B cell (primary cell): ENCODE measurements at regions of chr9 and their contacts with region 1.

Region 1: GRCh38 chr9:78261403-78262001 is 25.6 kb downstream of the CEP78 start:
- DNase-seq: peak; percentile 27
- ATAC-seq: no peak
- H3K4me3 ChIP-seq: no peak overlapping the region
- H3K4me3 Mint-ChIP-seq: no peak overlapping the region
- H3K27ac ChIP-seq: no peak overlapping the region
- H3K27ac Mint-ChIP-seq: no peak overlapping the region
- H3K4me1 ChIP-seq: no peaks in the 10 kb centered on the region
- H3K4me1 Mint-ChIP-seq: no peaks in the 10 kb centered on the region
- H3K27me3 ChIP-seq: no peaks in the 10 kb centered on the region
- H3K27me3 Mint-ChIP-seq: no peaks in the 10 kb centered on the region
- CTCF ChIP-seq: peak; percentile 82

Region 2: DNA sequence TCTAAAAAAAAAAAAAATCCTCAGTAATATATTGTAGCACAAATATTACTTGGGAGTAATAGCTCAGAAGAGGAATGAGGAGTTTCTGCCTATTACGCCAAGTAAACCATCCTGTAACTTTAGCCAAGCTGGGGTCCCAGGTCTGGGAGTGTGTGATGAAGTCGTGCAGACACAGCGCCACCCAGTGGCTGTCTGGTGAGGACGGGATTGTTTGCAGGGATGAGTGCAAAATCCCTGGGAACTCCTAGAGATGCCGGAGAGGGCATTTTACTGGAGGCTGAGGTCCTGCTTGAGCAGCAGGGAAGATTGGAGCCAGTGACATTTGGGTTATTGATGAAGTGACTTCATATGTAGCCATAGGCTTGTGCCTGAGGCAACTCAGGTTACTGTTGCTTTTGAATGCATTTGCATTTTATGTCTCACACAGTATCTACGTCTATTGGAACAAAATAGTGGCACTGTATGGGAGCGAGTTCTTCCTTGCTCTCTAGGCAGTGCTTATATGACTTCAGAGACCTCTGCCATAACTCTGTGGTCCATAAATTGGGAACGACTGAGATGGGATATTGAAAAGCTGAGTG is 108.2 kb after region 1 on chr9:
- CTCF ChIA-PET with region 1: interaction called, 12 read pairs
- POLR2A ChIA-PET with region 1: no interaction called
- intact Hi-C with region 1: no loop called
- DNase-seq: peak; percentile 49
- ATAC-seq: peak; percentile 56
- H3K4me3 ChIP-seq: no peak overlapping the region
- H3K4me3 Mint-ChIP-seq: no peak overlapping the region
- H3K27ac ChIP-seq: no peak overlapping the region
- H3K27ac Mint-ChIP-seq: no peak overlapping the region
- H3K4me1 ChIP-seq: no peaks in the 10 kb centered on the region
- H3K4me1 Mint-ChIP-seq: no peaks in the 10 kb centered on the region
- H3K27me3 ChIP-seq: peaks cover 0 to 5% (median 0%) of the 10 kb centered on the region in 4 experiments
- H3K27me3 Mint-ChIP-seq: peaks cover 9% of the 10 kb centered on the region
- CTCF ChIP-seq: peak; percentile 82